Gastrocnemius medialis (tissue), 4 donors: ENCODE measurements at regions of chr16 and their contacts with region 1.

Region 1: GRCh38 chr16:29700253-29700987 is 21.4 kb downstream of the QPRT start:
- DNase-seq: peak; percentile 60 to 68
- ATAC-seq: peak; percentile 92 to 95
- H3K4me3 ChIP-seq: no peak overlapping the region
- H3K27ac ChIP-seq: no peak overlapping the region
- H3K4me1 ChIP-seq: no peaks in the 10 kb centered on the region
- H3K27me3 ChIP-seq: no peaks in the 10 kb centered on the region
- CTCF ChIP-seq: peak; percentile 80 to 96 (median 82)
- POLR2A ChIP-seq: no peak

Region 2: GRCh38 chr16:29790953-29791844 is 90.8 kb after region 1 on chr16:
- in situ Hi-C with region 1: no loop called
- intact Hi-C with region 1: no loop called
- DNase-seq: no peak
- ATAC-seq: no peak
- H3K4me3 ChIP-seq: peak overlapping the region; percentile 79 to 95 (median 92)
- H3K27ac ChIP-seq: peak overlapping the region; percentile 60 to 95 (median 75)
- H3K4me1 ChIP-seq: peaks cover 18 to 23% of the 10 kb centered on the region in 2 donors
- H3K27me3 ChIP-seq: no peaks in the 10 kb centered on the region
- CTCF ChIP-seq: no peak
- POLR2A ChIP-seq: no peak

Region 3: GRCh38 chr16:29848420-29849297 is 148.2 kb after region 1 on chr16:
- in situ Hi-C with region 1: loop called in 3 of 4 experiments (anchors 5 to 10 kb)
- intact Hi-C with region 1: loop called (anchors 1 kb)
- DNase-seq: peak; percentile 33 to 50
- ATAC-seq: peak; percentile 50 to 87
- H3K4me3 ChIP-seq: no peak overlapping the region
- H3K27ac ChIP-seq: no peak overlapping the region
- H3K4me1 ChIP-seq: no peaks in the 10 kb centered on the region
- H3K27me3 ChIP-seq: no peaks in the 10 kb centered on the region
- CTCF ChIP-seq: peak; percentile 72 to 93 (median 84)
- POLR2A ChIP-seq: no peak

Region 4: GRCh38 chr16:30018731-30019158 is 318.3 kb after region 1 on chr16:
- in situ Hi-C with region 1: loop called in 2 of 4 experiments (anchors 10 to 25 kb)
- intact Hi-C with region 1: loop called (anchors 1 kb)
- DNase-seq: no peak
- ATAC-seq: no peak
- H3K4me3 ChIP-seq: no peak overlapping the region
- H3K27ac ChIP-seq: no peak overlapping the region
- H3K4me1 ChIP-seq: peaks cover 0 to 5% of the 10 kb centered on the region in 2 donors
- H3K27me3 ChIP-seq: peaks cover 0 to 5% (median 0%) of the 10 kb centered on the region in 3 donors
- CTCF ChIP-seq: no peak
- POLR2A ChIP-seq: no peak